ENCODE measurements at regions of chr6 and their contacts with region 1.

Region 1: GRCh38 chr6:446418-447366 is 55.1 kb downstream of the IRF4 start:
- DNase-seq: peak; percentile 97
- H3K4me3 Mint-ChIP-seq: peak overlapping the region; percentile 77
- H3K27ac Mint-ChIP-seq: peak overlapping the region; percentile 97
- H3K4me1 Mint-ChIP-seq: peaks cover 55% of the 10 kb centered on the region
- H3K27me3 Mint-ChIP-seq: peaks cover 1% of the 10 kb centered on the region

Region 2: DNA sequence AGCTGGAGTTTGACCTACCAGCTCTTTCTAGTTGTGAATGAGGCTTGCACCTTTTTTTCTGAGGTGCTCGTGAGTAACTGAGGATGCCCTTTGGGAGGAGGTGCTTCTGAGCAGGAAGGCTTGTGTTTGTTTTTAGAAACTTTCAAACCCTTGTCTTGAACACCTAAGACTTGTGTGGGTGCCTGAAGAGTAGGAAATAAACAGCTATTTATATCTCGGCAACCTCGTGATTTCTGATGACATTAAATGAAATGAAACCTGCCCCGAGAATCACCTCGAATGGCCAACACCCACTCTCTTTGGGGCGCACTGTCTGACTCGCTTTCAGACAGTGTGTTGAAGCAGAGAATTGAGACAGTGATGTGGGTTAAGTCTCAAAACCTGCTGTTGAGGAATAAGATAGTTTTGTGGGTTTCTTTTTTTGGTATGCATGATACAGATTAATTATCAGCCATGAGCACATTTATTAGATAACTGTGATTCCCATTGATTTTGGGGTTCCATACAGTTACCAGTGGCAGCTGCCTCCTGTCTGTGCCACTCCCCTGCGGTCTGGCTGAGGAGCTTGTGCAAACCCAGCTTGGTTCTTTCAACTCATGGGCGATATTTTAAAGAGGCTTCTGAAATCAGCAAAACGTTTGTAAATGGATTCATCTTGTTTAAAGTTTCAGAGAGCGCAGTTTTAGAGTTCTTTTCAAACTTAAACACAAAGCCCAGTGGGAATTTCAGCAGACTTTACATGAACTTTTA is 46.7 kb before region 1 on chr6:
- CTCF ChIA-PET with region 1: interaction called, 3 read pairs
- POLR2A ChIA-PET with region 1: interaction called, 27 read pairs
- intact Hi-C with region 1: loop called (anchors 1 kb)
- DNase-seq: peak; percentile 76
- H3K4me3 Mint-ChIP-seq: peak overlapping the region; percentile 64
- H3K27ac Mint-ChIP-seq: peak overlapping the region; percentile 88
- H3K4me1 Mint-ChIP-seq: peaks cover 94% of the 10 kb centered on the region
- H3K27me3 Mint-ChIP-seq: no peaks in the 10 kb centered on the region

Region 3: DNA sequence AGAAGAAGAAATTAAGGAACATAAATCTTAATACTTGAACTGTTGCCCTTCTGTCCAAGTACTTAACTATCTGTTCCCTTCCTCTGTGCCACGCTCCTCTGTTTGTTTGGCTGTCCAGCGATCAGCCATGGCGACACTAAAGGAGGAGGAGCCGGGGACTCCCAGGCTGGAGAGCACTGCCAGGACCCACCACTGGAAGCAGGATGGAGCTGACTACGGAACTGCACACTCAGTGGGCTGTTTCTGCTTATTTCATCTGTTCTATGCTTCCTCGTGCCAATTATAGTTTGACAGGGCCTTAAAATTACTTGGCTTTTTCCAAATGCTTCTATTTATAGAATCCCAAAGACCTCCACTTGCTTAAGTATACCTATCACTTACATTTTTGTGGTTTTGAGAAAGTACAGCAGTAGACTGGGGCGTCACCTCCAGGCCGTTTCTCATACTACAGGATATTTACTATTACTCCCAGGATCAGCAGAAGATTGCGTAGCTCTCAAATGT is 38.0 kb before region 1 on chr6:
- CTCF ChIA-PET with region 1: no interaction called
- POLR2A ChIA-PET with region 1: interaction called, 27 read pairs
- intact Hi-C with region 1: loop called (anchors 1 kb)
- DNase-seq: no peak
- H3K4me3 Mint-ChIP-seq: peak overlapping the region; percentile 14
- H3K27ac Mint-ChIP-seq: peak overlapping the region; percentile 62
- H3K4me1 Mint-ChIP-seq: peaks cover 66% of the 10 kb centered on the region
- H3K27me3 Mint-ChIP-seq: no peaks in the 10 kb centered on the region

Region 4: DNA sequence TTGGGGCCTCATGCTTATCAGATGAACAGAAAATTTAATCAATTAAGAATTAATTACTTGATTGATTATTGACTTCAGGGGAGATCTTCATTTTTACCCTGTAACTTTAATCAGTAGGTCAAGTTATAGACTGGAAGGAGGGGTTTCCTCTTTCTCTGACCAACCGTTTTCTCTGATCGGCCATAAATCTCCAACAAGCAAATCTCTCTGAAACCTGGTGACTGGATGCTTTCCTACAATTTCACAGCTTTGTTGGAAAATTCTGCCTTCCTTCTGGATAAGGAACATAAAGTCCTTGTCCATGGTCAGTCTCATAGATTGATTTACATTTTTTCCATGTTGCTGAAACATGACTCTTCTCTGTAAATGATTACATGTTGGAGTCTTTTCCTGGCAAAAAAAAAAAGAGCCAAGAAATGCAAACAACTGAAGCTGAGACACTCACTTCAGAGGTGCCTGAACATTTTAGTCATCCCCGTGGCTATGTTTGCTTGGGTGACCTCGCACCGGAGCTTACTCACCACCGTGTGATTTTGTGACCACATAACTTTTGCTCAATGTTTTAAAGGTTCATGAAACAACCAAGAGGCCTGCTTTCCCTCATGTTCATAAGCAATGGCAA is 24.1 kb before region 1 on chr6:
- CTCF ChIA-PET with region 1: no interaction called
- POLR2A ChIA-PET with region 1: interaction called, 3 read pairs
- intact Hi-C with region 1: loop called (anchors 1 kb)
- DNase-seq: peak; percentile 87
- H3K4me3 Mint-ChIP-seq: no peak overlapping the region
- H3K27ac Mint-ChIP-seq: peak overlapping the region; percentile 87
- H3K4me1 Mint-ChIP-seq: peaks cover 30% of the 10 kb centered on the region
- H3K27me3 Mint-ChIP-seq: no peaks in the 10 kb centered on the region

Region 5: GRCh38 chr6:467671-468082 is 21.0 kb after region 1 on chr6:
- CTCF ChIA-PET with region 1: interaction called, 4 read pairs
- POLR2A ChIA-PET with region 1: interaction called, 19 read pairs
- intact Hi-C with region 1: no loop called
- DNase-seq: peak; percentile 67
- H3K4me3 Mint-ChIP-seq: peak overlapping the region; percentile 16
- H3K27ac Mint-ChIP-seq: no peak overlapping the region
- H3K4me1 Mint-ChIP-seq: peaks cover 54% of the 10 kb centered on the region
- H3K27me3 Mint-ChIP-seq: peaks cover 34% of the 10 kb centered on the region

Region 6: DNA sequence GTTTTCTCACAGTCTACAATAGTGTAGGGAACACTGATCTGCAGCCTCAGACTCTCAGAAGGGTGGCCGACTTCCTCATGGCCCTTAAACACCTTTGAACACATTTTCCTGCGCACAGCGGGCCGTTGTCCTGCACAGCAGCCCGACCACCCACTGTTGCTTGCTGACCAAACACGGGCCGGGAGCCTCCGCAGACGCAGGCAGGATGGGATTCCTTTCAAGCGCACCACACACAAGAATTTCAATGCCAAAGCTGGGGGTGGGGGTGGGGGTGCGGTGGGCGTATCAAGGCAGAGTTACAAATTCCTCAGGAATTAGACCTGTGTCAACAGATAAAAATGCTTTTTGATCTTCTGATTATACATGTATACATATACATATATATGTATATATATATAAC is 135.7 kb after region 1 on chr6:
- CTCF ChIA-PET with region 1: no interaction called
- POLR2A ChIA-PET with region 1: no interaction called
- intact Hi-C with region 1: no loop called
- DNase-seq: no peak
- H3K4me3 Mint-ChIP-seq: no peak overlapping the region
- H3K27ac Mint-ChIP-seq: no peak overlapping the region
- H3K4me1 Mint-ChIP-seq: peaks cover 18% of the 10 kb centered on the region
- H3K27me3 Mint-ChIP-seq: no peaks in the 10 kb centered on the region

Measured in activated CD4-positive, alpha-beta memory T cell treated with anti-CD3 and anti-CD28 coated beads for 36 hours (primary cell).